ENCODE measurements at regions of chr9 and their contacts with region 1.

Region 1: DNA sequence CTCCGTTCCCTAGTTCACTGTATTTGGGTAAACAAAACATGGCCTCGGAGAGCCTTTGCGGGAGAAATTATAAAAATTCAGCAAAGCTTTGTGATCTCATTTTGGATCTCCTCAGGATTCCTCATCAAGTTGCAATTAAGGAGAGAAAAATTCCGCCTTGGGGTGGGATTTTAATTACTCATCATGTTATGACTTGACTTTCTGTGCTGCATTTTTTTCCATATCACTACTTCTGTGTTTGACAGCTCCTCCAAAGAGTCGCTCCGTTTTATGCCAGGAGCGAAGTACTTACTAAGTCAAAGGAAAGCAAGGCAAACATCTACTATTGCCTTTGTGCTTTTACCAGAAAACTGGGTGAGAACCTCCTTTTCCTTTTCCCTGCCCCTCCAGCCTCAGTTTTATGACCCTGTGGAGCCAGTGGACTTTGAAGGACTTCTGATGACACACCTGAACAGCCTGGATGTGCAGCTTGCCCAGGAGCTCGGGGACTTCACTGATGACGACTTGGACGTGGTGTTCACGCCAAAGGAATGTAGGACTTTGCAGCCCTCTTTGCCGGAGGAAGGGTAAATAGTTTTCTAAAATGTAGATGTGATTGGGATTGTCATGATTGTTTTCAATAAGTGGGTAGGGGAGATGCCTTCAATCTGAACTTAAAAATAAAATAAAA is 71.5 kb downstream of the DOCK8 start:
- DNase-seq: no peak
- CTCF ChIP-seq: no peak

Region 2: DNA sequence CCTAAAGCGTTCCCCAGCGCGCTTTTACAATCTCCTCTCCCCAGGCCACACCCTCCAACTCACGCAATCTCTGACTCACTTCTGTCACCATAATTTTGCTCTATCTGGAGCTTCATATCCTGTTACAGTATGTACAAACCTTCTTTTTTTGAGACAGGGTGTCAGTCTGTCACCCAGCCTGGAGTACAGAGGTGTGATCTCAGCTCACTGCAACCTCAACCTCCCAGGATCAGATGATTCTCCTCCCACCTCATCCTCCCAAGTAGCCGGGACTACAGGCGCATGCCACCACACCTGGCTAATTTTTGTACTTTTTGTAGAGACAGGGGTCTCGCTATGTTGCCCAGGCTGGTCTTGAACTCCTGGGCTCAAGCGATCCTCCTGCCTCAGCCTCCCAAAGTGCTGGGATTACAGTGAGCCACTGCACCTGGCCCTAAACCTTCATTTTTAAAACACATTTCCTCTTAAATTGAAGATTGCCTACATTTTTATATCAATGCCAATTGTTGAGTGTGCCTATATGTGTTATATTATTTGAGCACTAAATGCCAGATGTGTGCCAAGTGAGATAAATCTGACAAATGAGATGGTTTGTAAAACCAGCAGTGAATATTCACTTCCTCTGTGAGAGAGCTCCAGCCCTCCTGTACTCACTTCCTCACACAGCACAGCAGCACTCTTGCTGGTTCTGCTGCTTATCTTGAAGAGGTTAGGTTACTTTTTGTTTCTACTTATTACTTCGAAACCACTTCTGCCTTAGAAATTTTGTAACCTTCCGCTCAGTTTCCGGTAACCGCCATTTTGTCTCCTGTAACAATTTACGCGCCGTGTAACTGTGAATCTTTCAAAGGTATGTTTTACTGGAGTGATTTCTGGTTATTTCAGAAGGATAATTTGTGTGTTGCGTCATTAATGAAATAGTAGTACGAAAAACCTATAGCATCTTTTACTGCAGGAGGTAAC is 13.7 kb before region 1 on chr9:
- CTCF ChIA-PET with region 1: interaction called, 14 read pairs
- POLR2A ChIA-PET with region 1: no interaction called
- DNase-seq: peak; percentile 77
- CTCF ChIP-seq: no peak

Region 3: GRCh38 chr9:297104-297972 is 11.1 kb after region 1 on chr9:
- CTCF ChIA-PET with region 1: interaction called, 14 read pairs
- POLR2A ChIA-PET with region 1: no interaction called
- DNase-seq: peak; percentile 54
- CTCF ChIP-seq: no peak

Region 4: DNA sequence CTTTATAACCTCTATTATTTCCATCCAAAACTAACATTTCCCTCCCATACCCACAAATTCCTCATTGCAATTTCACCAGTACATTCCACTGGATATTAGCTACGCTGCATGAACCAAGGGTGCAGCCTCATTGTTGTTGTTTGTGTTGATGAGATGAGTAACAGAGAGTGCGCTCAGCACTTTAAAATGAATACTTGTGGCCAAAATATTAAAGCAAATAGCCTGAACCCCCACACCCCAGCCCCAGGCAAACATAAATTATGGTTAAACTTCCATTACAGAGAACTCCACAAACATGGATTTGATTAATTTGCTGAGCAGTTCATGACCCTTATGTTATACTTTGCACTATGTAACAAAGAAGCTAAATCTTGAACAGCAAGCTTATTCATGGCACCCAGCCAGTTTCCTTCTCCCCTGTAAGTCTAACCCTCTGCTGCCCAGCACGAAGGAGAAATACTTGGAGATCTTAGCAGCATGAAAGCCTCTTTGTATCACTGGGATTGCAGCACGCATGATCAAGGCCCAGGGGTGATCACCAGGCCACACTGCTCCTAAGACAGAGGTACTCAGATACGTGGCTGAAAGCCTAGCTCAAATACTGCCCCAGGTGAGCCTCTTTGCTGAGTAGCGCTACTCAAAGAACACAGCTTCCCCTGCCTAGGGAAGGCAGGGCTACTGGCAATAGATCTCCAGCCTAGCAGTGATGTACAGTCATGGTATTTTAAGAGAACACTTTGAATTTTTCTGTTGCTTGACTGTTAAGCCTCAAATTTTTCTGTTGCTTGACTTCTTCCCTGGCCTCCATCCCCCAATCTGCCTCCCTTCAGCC is 133.6 kb after region 1 on chr9:
- CTCF ChIA-PET with region 1: no interaction called
- POLR2A ChIA-PET with region 1: no interaction called
- DNase-seq: no peak
- CTCF ChIP-seq: no peak

Measured in GM10248 (cell line).